ENCODE measurements at regions of chr19 and their contacts with region 1.

Region 1: GRCh38 chr19:1173845-1174809 is at the start of gene SBNO2:
- DNase-seq: peak; percentile 80
- H3K4me3 ChIP-seq: peak within 1 kb of the TSS; percentile 91 to 100
- H3K27ac ChIP-seq: peak within 1 kb of the TSS; percentile 89 to 97
- H3K4me1 ChIP-seq: peaks cover 22% of the 10 kb centered on the region
- H3K27me3 ChIP-seq: no peaks in the 10 kb centered on the region
- CTCF ChIP-seq: no peak
- POLR2A ChIP-seq: peak; percentile 88
- total RNA-seq, gene SBNO2: 32.5 to 79.9 TPM

Region 2: GRCh38 chr19:1131738-1132551 is 42.2 kb before region 1 on chr19:
- intact Hi-C with region 1: loop called (anchors 5 kb)
- DNase-seq: peak; percentile 83
- H3K4me3 ChIP-seq: peak overlapping the region; percentile 39 to 54
- H3K27ac ChIP-seq: peak overlapping the region; percentile 83 to 89
- H3K4me1 ChIP-seq: peaks cover 29% of the 10 kb centered on the region
- H3K27me3 ChIP-seq: no peaks in the 10 kb centered on the region
- CTCF ChIP-seq: peak in 2 of 4 experiments; percentile 5 to 12
- POLR2A ChIP-seq: peak; percentile 82

Region 3: GRCh38 chr19:1249298-1249989 is 75.3 kb after region 1 on chr19:
- intact Hi-C with region 1: no loop called
- DNase-seq: peak; percentile 96
- H3K4me3 ChIP-seq: peak overlapping the region; percentile 87 to 95
- H3K27ac ChIP-seq: peak overlapping the region; percentile 100
- H3K4me1 ChIP-seq: peaks cover 42% of the 10 kb centered on the region
- H3K27me3 ChIP-seq: no peaks in the 10 kb centered on the region
- CTCF ChIP-seq: peak in 1 of 4 experiments; percentile 26
- POLR2A ChIP-seq: peak; percentile 92

Measured in prostate gland (tissue), 2 donors.